Endothelial cell of umbilical vein (primary cell): ENCODE measurements at regions of chr12 and their contacts with region 1.

Region 1: GRCh38 chr12:24909667-24910066 is 39.2 kb downstream of the BCAT1 start:
- DNase-seq: peak; percentile 86
- H3K4me3 ChIP-seq: no peak overlapping the region
- H3K27ac ChIP-seq: peak overlapping the region; percentile 71
- H3K4me1 ChIP-seq: peaks cover 36% of the 10 kb centered on the region
- H3K27me3 ChIP-seq: no peaks in the 10 kb centered on the region
- CTCF ChIP-seq: no peak
- POLR2A ChIP-seq: no peak

Region 2: GRCh38 chr12:24922090-24922489 is 12.4 kb after region 1 on chr12:
- CTCF ChIA-PET with region 1: interaction called, 7 read pairs
- POLR2A ChIA-PET with region 1: no interaction called
- dilution Hi-C with region 1: no loop called
- intact Hi-C with region 1: loop called (anchors 1 kb)
- DNase-seq: peak; percentile 56
- H3K4me3 ChIP-seq: no peak overlapping the region
- H3K27ac ChIP-seq: peak overlapping the region; percentile 62
- H3K4me1 ChIP-seq: peaks cover 43% of the 10 kb centered on the region
- H3K27me3 ChIP-seq: no peaks in the 10 kb centered on the region
- CTCF ChIP-seq: no peak
- POLR2A ChIP-seq: no peak